ENCODE measurements at regions of chr2 and their contacts with region 1.

Region 1: GRCh38 chr2:137493261-137493660 is 471.0 kb upstream of the HNMT start:
- DNase-seq: no peak
- ATAC-seq: no peak
- H3K4me3 ChIP-seq: no peak overlapping the region
- H3K4me3 Mint-ChIP-seq: no peak overlapping the region
- H3K27ac ChIP-seq: no peak overlapping the region
- H3K27ac Mint-ChIP-seq: no peak overlapping the region
- H3K4me1 ChIP-seq: no peaks in the 10 kb centered on the region
- H3K4me1 Mint-ChIP-seq: no peaks in the 10 kb centered on the region
- H3K27me3 ChIP-seq: no peaks in the 10 kb centered on the region
- H3K27me3 Mint-ChIP-seq: no peaks in the 10 kb centered on the region
- CTCF ChIP-seq: no peak

Region 2: DNA sequence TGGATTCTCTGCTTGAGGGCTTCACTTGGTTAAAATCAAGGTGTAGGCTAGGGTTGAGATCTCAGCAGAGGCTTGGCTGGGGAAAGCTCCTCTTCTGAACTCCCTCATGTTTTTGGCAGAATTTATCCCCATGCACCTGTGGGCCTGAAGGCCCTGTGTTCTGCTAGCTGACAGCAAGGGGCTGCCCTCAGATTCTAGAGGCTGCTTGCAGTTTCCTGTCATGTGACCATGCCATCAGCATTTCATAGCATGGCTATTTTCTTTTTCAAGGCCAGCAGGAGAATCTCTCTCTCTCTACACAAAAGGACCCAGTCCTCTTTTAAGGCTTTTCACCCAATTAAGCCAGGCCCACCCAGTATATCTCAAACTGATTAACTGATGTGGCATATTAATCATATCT is 43.8 kb before region 1 on chr2:
- CTCF ChIA-PET with region 1: no interaction called
- POLR2A ChIA-PET with region 1: no interaction called
- intact Hi-C with region 1: no loop called
- DNase-seq: no peak
- ATAC-seq: no peak
- H3K4me3 ChIP-seq: no peak overlapping the region
- H3K4me3 Mint-ChIP-seq: no peak overlapping the region
- H3K27ac ChIP-seq: no peak overlapping the region
- H3K27ac Mint-ChIP-seq: no peak overlapping the region
- H3K4me1 ChIP-seq: no peaks in the 10 kb centered on the region
- H3K4me1 Mint-ChIP-seq: no peaks in the 10 kb centered on the region
- H3K27me3 ChIP-seq: no peaks in the 10 kb centered on the region
- H3K27me3 Mint-ChIP-seq: no peaks in the 10 kb centered on the region
- CTCF ChIP-seq: no peak

Region 3: DNA sequence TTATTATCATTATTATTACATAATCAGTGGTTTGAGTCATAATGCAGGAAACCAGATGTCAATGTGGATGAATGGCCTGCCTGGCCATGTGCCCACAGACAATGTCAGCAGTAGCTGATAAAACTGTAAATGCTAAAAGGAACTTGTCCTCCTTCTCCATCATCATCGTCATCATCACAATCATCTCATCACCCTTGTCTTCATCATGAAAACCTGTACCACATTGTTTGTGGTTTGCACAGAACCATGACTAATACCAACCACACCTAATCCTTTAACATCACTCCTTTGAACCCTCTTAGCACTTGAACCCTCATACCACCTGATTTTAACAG is 567.0 kb after region 1 on chr2:
- CTCF ChIA-PET with region 1: no interaction called
- POLR2A ChIA-PET with region 1: no interaction called
- intact Hi-C with region 1: loop called in 1 of 2 experiments (anchors 10 kb)
- DNase-seq: no peak
- ATAC-seq: no peak
- H3K4me3 ChIP-seq: no peak overlapping the region
- H3K4me3 Mint-ChIP-seq: no peak overlapping the region
- H3K27ac ChIP-seq: no peak overlapping the region
- H3K27ac Mint-ChIP-seq: no peak overlapping the region
- H3K4me1 ChIP-seq: no peaks in the 10 kb centered on the region
- H3K4me1 Mint-ChIP-seq: no peaks in the 10 kb centered on the region
- H3K27me3 ChIP-seq: no peaks in the 10 kb centered on the region
- H3K27me3 Mint-ChIP-seq: no peaks in the 10 kb centered on the region
- CTCF ChIP-seq: no peak